ENCODE measurements at regions of chrX and their contacts with region 1.

Region 1: DNA sequence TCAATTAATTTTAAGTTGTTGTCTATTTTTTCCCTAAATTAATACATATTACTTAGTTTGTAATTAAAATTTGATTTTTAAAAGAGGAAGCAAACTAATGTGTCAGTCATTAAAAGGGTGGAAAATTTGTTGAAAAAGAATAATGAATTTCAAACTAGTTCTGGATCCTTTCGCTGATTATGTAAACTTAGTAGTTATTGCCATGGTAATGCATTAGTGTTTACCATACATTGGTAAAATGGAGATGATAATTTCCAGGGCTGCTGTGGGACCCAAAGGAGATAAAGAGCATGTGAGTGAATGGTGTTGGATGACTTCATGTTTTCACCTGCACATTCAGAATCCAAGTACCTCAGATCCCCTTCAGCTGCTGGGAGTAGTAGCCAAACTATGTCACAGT is 6.5 kb downstream of the BEX3 start:
- DNase-seq: no peak

Region 2: DNA sequence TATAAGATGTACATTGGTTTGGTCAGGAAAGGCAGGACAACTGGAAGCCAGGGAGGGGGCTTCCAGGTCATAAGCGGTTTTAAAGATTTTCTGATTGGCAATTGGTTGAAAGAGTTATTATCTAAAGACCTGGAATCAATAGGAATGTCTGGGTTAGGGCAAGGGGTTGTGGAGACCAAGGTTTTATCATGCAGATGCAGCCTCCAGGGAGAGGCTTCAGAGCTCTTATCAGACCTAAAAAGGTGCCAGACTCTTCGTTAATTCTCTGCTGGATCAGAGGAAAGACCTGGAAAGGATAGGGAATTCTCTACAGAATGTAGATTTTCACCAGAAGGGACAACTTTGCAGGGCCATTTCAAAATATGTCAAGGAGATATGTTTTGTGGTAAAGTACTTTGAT is 56.3 kb after region 1 on chrX:
- intact Hi-C with region 1: loop called (anchors 2 kb)
- DNase-seq: no peak

Measured in cardiac septum (tissue), 1 donor.